ENCODE measurements at regions of chr10 and their contacts with region 1.

Region 1: DNA sequence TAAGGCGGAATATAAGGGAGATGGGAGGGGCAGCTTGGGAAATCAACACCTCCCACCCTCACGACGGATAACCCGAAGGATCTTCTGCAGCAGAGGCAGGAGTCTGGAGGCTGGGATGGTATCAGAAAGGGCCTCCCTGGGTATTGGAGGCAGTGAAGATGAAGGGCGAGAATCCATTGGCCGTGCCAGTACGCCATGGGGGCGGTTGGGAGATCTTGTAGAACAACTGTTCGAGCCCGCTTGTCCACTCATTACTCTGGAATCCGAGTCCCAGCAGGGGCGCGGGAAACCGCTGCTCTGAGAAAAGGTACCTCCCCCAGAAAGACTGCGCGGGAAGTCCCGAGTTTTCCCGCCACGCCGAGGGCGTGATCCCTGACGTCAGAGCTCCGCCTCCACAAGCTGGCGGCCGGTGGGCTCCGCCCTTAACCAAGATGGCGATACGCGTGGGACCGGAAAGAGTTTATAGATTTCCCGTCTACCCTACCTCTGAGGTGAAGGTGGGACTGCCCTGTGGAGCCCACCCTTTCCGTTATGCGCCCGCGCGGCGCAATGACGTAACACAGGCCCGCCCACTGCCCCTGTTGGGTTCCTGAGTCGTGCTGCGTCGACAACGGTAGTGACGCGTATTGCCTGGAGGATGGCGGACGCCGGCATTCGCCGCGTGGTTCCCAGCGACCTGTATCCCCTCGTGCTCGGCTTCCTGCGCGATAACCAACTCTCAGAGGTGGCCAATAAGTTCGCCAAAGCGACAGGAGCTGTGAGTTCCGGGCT is at the start of gene NOLC1:
- DNase-seq: peak; percentile 99 to 100 (median 100)
- ATAC-seq: peak; percentile 93
- H3K4me3 ChIP-seq: peak within 1 kb of the TSS; percentile 80 to 92
- H3K4me3 Mint-ChIP-seq: peak within 1 kb of the TSS; percentile 89
- H3K27ac ChIP-seq: peak within 1 kb of the TSS; percentile 93 to 95
- H3K27ac Mint-ChIP-seq: peak within 1 kb of the TSS; percentile 90
- H3K4me1 ChIP-seq: peaks cover 27% of the 10 kb centered on the region
- H3K4me1 Mint-ChIP-seq: peaks cover 41% of the 10 kb centered on the region
- H3K27me3 ChIP-seq: no peaks in the 10 kb centered on the region
- H3K27me3 Mint-ChIP-seq: no peaks in the 10 kb centered on the region
- CTCF ChIP-seq: no peak
- total RNA-seq, gene NOLC1: 39.5 to 42.0 TPM

Region 2: GRCh38 chr10:101807158-101807557 is 344.8 kb before region 1 on chr10:
- CTCF ChIA-PET with region 1: no interaction called
- POLR2A ChIA-PET with region 1: no interaction called
- intact Hi-C with region 1: no loop called
- DNase-seq: no peak
- ATAC-seq: no peak
- H3K4me3 ChIP-seq: no peak overlapping the region
- H3K4me3 Mint-ChIP-seq: no peak overlapping the region
- H3K27ac ChIP-seq: no peak overlapping the region
- H3K27ac Mint-ChIP-seq: peak overlapping the region; percentile 22
- H3K4me1 ChIP-seq: peaks cover 8% of the 10 kb centered on the region
- H3K4me1 Mint-ChIP-seq: peaks cover 40% of the 10 kb centered on the region
- H3K27me3 ChIP-seq: no peaks in the 10 kb centered on the region
- H3K27me3 Mint-ChIP-seq: no peaks in the 10 kb centered on the region
- CTCF ChIP-seq: no peak

Region 3: DNA sequence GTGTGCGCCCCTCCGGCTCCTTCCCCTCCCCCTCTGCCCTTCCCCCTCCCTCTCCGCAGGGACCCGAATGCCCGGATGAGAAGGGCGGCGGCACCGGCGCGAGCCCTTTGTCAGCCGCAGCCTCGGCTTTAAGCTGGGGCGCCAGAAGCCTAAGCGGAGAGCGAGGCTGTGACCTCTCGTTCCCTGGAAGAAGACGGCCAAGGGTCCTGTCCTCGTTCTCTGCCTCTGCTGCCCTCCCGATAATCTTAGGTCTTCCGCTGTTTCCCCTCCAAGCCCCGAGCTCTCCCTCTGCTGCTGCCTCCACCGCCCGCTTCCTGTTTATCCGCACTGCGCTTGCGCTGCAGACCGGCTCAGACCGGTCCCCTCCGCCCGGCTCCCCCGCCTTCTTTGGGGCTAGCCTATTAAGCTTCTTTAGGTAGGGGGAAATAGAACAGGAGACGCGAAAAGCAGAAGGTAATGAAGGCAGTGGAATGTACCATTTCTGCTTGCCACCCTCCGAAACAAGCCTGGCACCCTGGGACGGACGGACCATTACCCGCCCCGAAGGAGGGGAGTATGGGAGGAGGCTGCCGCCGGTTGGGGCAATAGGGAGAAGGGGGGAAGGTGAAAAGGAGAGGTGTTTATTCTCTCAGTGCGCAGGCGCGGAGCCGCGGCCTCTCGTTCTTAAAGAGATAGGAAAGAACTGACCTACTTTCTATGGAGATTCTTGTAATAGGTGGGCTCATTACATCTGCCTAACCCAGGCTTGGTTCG is 333.7 kb before region 1 on chr10 and contains the start of gene OGA:
- CTCF ChIA-PET with region 1: no interaction called
- POLR2A ChIA-PET with region 1: interaction called, 10 read pairs
- intact Hi-C with region 1: no loop called
- DNase-seq: peak; percentile 94 to 100 (median 98)
- ATAC-seq: peak; percentile 90
- H3K4me3 ChIP-seq: peak within 1 kb of the TSS; percentile 78 to 82
- H3K4me3 Mint-ChIP-seq: peak within 1 kb of the TSS; percentile 98
- H3K27ac ChIP-seq: peak within 1 kb of the TSS; percentile 81 to 90
- H3K27ac Mint-ChIP-seq: peak within 1 kb of the TSS; percentile 97
- H3K4me1 ChIP-seq: peaks cover 32% of the 10 kb centered on the region
- H3K4me1 Mint-ChIP-seq: peaks cover 51% of the 10 kb centered on the region
- H3K27me3 ChIP-seq: no peaks in the 10 kb centered on the region
- H3K27me3 Mint-ChIP-seq: no peaks in the 10 kb centered on the region
- CTCF ChIP-seq: no peak
- total RNA-seq, gene OGA: 356 to 394 TPM

Region 4: DNA sequence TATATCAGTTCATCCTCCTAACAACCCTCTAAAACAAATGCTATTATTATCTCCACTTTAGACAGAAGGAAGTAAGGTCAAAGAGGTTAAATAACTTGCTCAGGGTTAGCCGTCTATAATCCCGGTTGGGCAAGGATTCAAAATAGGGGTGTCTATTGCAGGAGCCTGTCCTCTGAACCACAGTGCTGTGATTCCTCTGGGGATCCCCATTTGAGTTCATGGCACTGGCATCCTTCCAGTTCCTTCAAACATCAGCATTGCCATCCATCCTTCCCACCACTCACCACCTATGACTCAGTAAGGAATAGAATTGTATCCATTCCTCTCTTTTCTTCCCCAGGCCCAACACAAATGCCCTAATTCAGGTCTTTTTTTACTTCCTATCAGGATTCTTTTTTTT is 61.2 kb before region 1 on chr10:
- CTCF ChIA-PET with region 1: no interaction called
- POLR2A ChIA-PET with region 1: no interaction called
- intact Hi-C with region 1: no loop called
- DNase-seq: no peak
- ATAC-seq: no peak
- H3K4me3 ChIP-seq: no peak overlapping the region
- H3K4me3 Mint-ChIP-seq: no peak overlapping the region
- H3K27ac ChIP-seq: no peak overlapping the region
- H3K27ac Mint-ChIP-seq: no peak overlapping the region
- H3K4me1 ChIP-seq: no peaks in the 10 kb centered on the region
- H3K4me1 Mint-ChIP-seq: no peaks in the 10 kb centered on the region
- H3K27me3 ChIP-seq: no peaks in the 10 kb centered on the region
- H3K27me3 Mint-ChIP-seq: no peaks in the 10 kb centered on the region
- CTCF ChIP-seq: no peak

Region 5: DNA sequence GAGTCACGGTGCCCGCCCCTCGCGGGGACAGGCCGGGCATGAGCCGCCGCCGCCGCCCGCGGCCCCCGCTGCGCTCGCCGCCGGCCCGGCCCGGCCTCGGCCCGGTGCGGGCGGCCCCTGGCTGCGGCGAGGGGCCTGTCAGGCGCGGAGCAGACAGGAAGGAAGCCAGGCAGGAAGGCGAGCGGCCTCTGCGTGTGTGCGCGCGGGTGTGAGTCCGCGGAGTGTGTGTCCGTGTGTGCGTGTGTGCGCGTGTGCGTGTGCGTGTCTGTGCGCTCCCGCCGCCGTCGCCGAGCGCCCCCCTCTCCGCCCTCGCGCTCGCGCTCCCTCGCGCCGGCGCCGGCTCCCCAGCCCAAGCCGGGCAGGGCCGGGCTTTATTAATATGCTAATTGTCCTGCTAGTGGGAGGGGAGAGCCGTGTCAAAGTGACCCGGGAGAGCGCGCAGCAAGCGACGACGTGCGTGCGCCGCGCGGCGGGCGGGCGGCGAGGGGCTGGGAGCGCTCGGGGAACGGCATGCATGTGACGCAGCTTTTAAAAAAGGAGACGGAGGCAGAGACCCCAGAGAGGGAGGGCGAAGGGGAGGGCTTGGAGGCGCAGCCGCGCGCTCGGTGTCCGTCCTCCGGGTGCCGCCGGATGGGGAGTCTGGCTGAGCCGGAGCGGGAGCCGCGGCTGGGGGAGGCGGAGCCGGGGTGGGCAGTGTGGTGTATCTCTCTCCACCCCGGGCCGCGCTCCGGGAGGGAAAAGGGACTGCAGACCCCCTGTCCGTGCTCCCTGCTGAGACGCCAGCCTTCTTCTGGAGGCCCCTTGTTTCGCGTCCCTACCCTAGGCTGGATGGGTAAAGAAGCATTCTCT is 31.6 kb before region 1 on chr10 and contains the start of gene LDB1:
- CTCF ChIA-PET with region 1: no interaction called
- POLR2A ChIA-PET with region 1: interaction called, 5 read pairs
- intact Hi-C with region 1: loop called (anchors 1 kb)
- DNase-seq: peak; percentile 40 to 91 (median 70)
- ATAC-seq: peak; percentile 45
- H3K4me3 ChIP-seq: peak within 1 kb of the TSS; percentile 84 to 94
- H3K4me3 Mint-ChIP-seq: peak within 1 kb of the TSS; percentile 90
- H3K27ac ChIP-seq: peak within 1 kb of the TSS; percentile 97 to 98
- H3K27ac Mint-ChIP-seq: peak within 1 kb of the TSS; percentile 98
- H3K4me1 ChIP-seq: peaks cover 51% of the 10 kb centered on the region
- H3K4me1 Mint-ChIP-seq: peaks cover 55% of the 10 kb centered on the region
- H3K27me3 ChIP-seq: no peaks in the 10 kb centered on the region
- H3K27me3 Mint-ChIP-seq: no peaks in the 10 kb centered on the region
- CTCF ChIP-seq: no peak
- total RNA-seq, gene LDB1: 113 to 124 TPM

Region 6: DNA sequence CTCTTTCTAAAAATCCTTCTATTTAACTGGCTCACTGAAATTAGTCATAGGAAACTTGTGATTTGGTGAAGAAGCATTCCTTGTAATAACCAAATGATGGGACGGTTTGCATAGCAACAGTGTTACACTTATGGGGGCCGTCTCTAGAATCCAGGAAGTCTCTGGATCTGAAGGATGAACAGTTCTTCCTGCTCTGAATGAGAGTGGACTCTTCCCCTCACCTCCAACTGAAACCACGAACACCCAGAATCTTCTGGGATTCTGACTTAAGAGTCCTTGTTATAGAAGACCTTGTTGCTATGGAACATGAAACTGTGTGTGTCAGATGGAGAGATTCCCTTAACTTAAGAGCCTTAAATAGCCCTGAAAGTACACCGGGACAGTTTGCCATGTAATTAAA is 23.5 kb after region 1 on chr10:
- CTCF ChIA-PET with region 1: no interaction called
- POLR2A ChIA-PET with region 1: no interaction called
- intact Hi-C with region 1: no loop called
- DNase-seq: no peak
- ATAC-seq: no peak
- H3K4me3 ChIP-seq: no peak overlapping the region
- H3K4me3 Mint-ChIP-seq: no peak overlapping the region
- H3K27ac ChIP-seq: no peak overlapping the region
- H3K27ac Mint-ChIP-seq: no peak overlapping the region
- H3K4me1 ChIP-seq: no peaks in the 10 kb centered on the region
- H3K4me1 Mint-ChIP-seq: no peaks in the 10 kb centered on the region
- H3K27me3 ChIP-seq: peaks cover 0 to 2% of the 10 kb centered on the region in 2 experiments
- H3K27me3 Mint-ChIP-seq: no peaks in the 10 kb centered on the region
- CTCF ChIP-seq: no peak

Region 7: DNA sequence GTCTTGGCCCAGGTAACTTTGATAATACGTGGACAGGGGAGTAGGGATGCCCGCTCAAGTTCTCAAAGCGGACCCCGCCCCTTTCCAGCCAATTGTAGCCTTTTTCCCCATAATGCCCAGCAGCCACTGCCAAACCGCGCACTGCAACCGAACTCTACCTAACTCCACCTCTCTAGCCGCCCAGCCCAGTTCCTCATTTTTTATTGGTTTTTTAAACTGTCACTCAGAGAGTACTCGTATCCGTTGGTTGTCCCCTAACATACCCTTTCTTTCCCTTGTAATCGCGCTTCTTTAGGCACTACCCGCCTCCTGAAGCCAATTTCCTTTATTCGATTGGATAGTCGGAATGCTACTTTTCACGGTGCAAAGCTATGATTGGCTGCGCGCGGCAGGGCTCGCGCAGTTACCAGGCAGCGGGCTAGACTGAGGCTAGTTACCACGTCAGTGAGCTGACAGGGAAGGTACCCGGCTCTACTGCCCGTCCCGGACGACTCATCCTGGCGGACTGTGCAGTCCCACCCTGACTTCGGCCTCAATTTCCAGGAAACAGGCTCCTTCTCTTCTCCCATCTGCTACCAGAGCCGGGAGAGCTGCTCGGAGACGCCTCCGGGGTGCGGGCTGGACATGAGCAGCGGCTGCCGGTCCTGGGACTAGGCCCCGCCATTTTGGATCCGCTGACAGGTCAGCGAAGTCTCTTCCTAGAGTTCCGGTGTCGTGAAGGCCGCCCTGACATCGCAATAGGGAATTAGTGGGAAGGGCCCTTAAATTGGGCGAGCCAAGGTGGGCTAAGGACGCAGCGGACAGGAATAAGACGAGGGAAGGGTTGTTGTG is 93.4 kb after region 1 on chr10 and contains the start of gene GBF1:
- CTCF ChIA-PET with region 1: no interaction called
- POLR2A ChIA-PET with region 1: no interaction called
- intact Hi-C with region 1: loop called in 1 of 2 experiments (anchors 1 kb)
- DNase-seq: peak; percentile 75 to 98 (median 87)
- ATAC-seq: peak; percentile 84
- H3K4me3 ChIP-seq: peak within 1 kb of the TSS; percentile 82 to 95
- H3K4me3 Mint-ChIP-seq: peak within 1 kb of the TSS; percentile 94
- H3K27ac ChIP-seq: peak within 1 kb of the TSS; percentile 89 to 93
- H3K27ac Mint-ChIP-seq: peak within 1 kb of the TSS; percentile 92
- H3K4me1 ChIP-seq: peaks cover 44% of the 10 kb centered on the region
- H3K4me1 Mint-ChIP-seq: peaks cover 54% of the 10 kb centered on the region
- H3K27me3 ChIP-seq: peaks cover 10 to 22% of the 10 kb centered on the region in 2 experiments
- H3K27me3 Mint-ChIP-seq: peaks cover 19% of the 10 kb centered on the region
- CTCF ChIP-seq: no peak
- total RNA-seq, gene GBF1: 26.7 to 31.3 TPM

Region 8: DNA sequence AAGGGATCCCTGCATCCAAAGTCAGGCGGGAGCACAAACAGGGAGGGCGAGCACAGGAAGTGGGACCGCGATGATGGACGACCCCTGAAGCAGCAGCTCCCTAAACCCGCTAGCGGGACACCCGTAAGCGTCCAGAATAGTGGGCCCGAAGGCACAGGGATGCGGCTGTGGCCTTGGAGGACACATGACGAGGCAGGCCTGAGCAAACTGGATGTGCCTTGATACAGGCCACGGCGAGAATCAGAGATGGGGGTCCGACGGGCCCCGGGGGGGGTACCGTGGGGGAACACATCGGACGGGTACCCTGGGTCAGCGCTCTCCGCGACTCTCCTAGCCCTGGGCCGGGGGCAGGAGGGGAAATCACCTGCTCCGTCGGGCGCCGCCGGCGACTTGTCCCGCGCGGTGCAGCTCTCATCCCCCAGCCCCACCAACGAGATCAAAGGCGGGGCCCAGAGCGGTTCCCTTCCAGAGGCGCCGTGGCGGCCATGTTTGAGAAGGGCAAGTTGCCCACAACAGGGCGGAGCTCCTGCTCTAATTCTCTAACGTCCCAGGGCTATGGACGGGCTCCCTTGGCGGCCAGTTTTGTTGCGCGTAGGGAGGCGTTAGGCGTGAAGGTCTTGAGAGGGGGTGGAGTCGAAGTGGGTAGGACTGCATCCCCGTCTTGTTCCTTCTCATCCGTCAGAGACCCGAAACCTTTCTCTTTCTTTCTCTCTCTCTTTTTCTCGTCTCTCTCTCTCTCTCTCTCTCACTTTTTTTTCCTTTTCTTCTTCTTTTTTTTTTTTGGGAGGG is 280.4 kb after region 1 on chr10 and contains the start of gene CUEDC2:
- CTCF ChIA-PET with region 1: no interaction called
- POLR2A ChIA-PET with region 1: no interaction called
- intact Hi-C with region 1: loop called in 1 of 2 experiments (anchors 1 kb)
- DNase-seq: peak; percentile 88 to 98 (median 93)
- ATAC-seq: peak; percentile 93
- H3K4me3 ChIP-seq: peak within 1 kb of the TSS; percentile 76 to 96
- H3K4me3 Mint-ChIP-seq: peak within 1 kb of the TSS; percentile 95
- H3K27ac ChIP-seq: peak within 1 kb of the TSS; percentile 62 to 67
- H3K27ac Mint-ChIP-seq: peak within 1 kb of the TSS; percentile 89
- H3K4me1 ChIP-seq: peaks cover 48% of the 10 kb centered on the region
- H3K4me1 Mint-ChIP-seq: peaks cover 49% of the 10 kb centered on the region
- H3K27me3 ChIP-seq: no peaks in the 10 kb centered on the region
- H3K27me3 Mint-ChIP-seq: no peaks in the 10 kb centered on the region
- CTCF ChIP-seq: no peak
- total RNA-seq, gene CUEDC2: 24.2 to 27.0 TPM

Region 9: DNA sequence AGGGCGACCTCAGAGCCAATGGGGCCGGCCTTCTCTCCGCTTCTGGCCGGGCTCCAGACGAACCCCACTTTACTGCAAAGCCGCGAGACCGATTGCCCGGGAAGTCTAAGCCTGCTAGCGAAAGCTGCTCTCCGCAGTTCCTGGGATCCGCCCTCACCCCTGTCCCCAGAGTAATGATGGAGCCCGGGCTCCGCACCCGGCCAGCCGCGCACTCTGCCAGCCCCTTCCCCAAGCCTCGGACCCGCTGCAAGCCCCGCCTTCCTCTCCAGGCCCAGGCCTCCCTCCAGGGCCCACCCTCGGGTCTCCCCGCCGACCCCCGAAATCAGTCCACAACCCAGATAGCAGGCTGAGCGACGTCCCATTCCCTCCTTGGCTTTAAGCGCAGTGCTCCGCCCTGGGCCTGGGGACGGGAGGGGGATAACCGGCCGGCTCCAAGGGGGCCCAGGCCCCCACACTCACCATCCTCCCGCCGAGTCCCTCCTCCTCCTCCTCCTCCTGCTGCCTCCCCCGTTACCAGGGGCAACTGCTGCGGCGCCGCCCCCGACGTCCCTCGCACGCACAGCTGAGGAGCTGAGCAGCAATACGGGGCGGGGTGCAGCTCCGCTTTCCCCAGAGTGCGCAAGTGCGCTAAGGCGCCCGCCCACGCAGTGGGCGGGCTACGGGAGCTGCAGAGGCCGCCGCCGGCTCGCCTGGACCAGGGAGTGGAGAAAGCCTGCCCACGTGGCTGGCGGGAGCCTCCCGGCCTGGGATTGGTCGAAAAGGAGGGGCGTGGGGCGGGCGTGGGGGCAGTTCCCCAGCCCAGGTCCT is 562.1 kb after region 1 on chr10 and contains the start of gene ARL3:
- CTCF ChIA-PET with region 1: no interaction called
- POLR2A ChIA-PET with region 1: no interaction called
- intact Hi-C with region 1: no loop called
- DNase-seq: peak; percentile 79 to 98 (median 94)
- ATAC-seq: peak; percentile 89
- H3K4me3 ChIP-seq: peak within 1 kb of the TSS; percentile 96 to 98
- H3K4me3 Mint-ChIP-seq: peak within 1 kb of the TSS; percentile 97
- H3K27ac ChIP-seq: peak within 1 kb of the TSS; percentile 84 to 91
- H3K27ac Mint-ChIP-seq: peak within 1 kb of the TSS; percentile 94
- H3K4me1 ChIP-seq: peaks cover 21% of the 10 kb centered on the region
- H3K4me1 Mint-ChIP-seq: peaks cover 59% of the 10 kb centered on the region
- H3K27me3 ChIP-seq: no peaks in the 10 kb centered on the region
- H3K27me3 Mint-ChIP-seq: no peaks in the 10 kb centered on the region
- CTCF ChIP-seq: peak; percentile 65
- total RNA-seq, gene ARL3: 0.49 to 0.75 TPM

Region 10: DNA sequence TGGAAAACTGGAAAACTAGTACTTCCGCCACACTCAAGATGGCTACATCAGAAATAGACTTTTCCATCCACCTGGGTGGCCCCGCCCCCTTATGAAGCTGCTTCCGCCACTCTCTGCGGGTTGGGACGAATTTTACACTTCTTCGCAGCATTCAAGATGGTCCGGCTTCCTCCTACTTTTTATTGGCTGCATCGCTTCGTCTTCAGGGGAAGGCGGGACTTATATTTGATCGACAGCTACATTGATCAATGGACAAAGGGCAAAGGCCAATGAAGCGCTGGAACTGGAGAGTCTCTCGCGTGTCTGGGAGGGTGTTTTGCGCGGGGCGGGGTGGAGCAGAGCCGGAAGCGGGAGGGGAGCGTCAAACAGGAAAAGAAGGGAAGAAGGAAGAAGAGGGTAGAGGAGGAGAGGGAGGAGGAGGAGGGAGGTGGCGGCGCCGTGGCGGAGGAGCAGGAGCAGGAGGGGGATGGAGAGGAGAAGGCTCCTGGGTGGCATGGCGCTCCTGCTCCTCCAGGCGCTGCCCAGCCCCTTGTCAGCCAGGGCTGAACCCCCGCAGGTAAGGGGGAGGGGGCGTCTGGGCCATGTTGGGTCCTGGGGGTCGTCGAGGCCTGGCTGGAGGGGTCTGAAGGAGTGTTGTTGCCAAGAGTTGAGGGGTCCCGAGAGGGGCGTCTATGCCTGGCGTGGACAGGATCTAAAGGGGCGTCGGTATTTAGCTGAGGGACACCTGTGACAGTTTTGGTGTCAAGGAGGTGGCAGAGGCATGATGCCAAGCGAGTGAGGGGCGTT is 591.8 kb after region 1 on chr10 and contains the start of gene WBP1L:
- CTCF ChIA-PET with region 1: no interaction called
- POLR2A ChIA-PET with region 1: no interaction called
- intact Hi-C with region 1: loop called in 1 of 2 experiments (anchors 1 kb)
- DNase-seq: peak; percentile 90 to 99 (median 95)
- ATAC-seq: peak; percentile 96
- H3K4me3 ChIP-seq: peak within 1 kb of the TSS; percentile 87 to 99
- H3K4me3 Mint-ChIP-seq: peak within 1 kb of the TSS; percentile 92
- H3K27ac ChIP-seq: peak within 1 kb of the TSS; percentile 64 to 91
- H3K27ac Mint-ChIP-seq: peak within 1 kb of the TSS; percentile 90
- H3K4me1 ChIP-seq: peaks cover 34% of the 10 kb centered on the region
- H3K4me1 Mint-ChIP-seq: peaks cover 50% of the 10 kb centered on the region
- H3K27me3 ChIP-seq: no peaks in the 10 kb centered on the region
- H3K27me3 Mint-ChIP-seq: no peaks in the 10 kb centered on the region
- CTCF ChIP-seq: no peak
- total RNA-seq, gene WBP1L: 5.5 to 5.9 TPM

Measured in CD8-positive, alpha-beta T cell (primary cell).